Spleen (tissue), 13 donors: ENCODE measurements at regions of chr21 and their contacts with region 1.

Region 1: DNA sequence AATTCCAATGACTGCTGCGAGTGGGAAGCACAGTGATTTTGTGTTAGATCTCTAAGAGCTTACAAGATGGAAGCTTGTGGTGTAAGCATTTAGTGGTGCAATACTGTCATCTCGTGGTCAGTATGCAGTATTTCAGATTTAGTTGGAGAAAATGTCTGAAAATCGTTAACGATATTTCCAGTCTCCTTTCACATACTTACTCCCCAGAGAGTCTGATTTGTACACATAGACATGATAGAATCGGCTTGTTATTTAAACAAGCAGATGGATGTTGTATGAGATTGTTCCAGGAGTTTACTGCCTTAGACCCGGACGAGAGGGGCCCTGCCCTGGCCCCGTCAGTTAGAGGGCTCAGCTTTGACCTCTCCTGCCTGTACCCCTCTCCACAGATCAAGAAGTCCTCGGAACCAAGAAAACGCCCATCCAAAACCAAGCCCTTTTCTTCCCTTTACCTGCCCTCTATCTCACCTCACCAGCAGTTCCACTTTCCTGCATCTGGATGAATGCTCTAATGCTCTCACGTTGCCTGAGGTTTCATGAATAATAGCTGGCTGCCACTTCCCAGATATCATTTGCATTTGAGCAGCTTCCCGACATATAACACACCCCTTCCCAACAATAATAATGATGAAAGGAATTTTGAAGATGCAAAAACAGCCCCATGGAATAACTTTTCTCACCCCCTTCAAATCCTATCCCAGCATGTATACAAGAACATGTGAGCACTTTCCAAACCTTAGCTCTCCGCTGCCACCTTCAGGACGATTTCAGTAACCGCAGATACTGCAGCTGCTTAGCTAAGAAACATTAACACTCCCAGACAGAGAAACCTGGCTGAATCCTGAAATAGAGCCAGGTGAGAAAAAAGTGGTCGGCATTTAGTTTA is 247.3 kb downstream of the LTN1 start:
- DNase-seq: peak; percentile 77
- H3K4me3 ChIP-seq: peak overlapping the region; percentile 25 to 65 (median 33)
- H3K27ac ChIP-seq: peak overlapping the region in 5 of 8 donors; percentile 30 to 58 (median 49)
- H3K4me1 ChIP-seq: peaks cover 5 to 17% (median 14%) of the 10 kb centered on the region in 6 donors
- H3K27me3 ChIP-seq: no peaks in the 10 kb centered on the region
- CTCF ChIP-seq: peak; percentile 63 to 96 (median 83)
- POLR2A ChIP-seq: no peak

Region 2: GRCh38 chr21:26842976-26843932 is 1902.1 kb before region 1 on chr21:
- intact Hi-C with region 1: loop called (anchors 10 kb)
- DNase-seq: peak; percentile 80
- H3K4me3 ChIP-seq: peak overlapping the region; percentile 45 to 81 (median 60)
- H3K27ac ChIP-seq: peak overlapping the region; percentile 46 to 93 (median 87)
- H3K4me1 ChIP-seq: peaks cover 13 to 87% (median 57%) of the 10 kb centered on the region in 6 donors
- H3K27me3 ChIP-seq: peaks cover 0 to 68% (median 38%) of the 10 kb centered on the region in 7 donors
- CTCF ChIP-seq: peak in 4 of 11 experiments; percentile 8 to 26 (median 18)
- POLR2A ChIP-seq: no peak

Region 3: GRCh38 chr21:28063241-28064216 is 681.8 kb before region 1 on chr21:
- intact Hi-C with region 1: loop called (anchors 10 kb)
- DNase-seq: no peak
- H3K4me3 ChIP-seq: no peak overlapping the region
- H3K27ac ChIP-seq: no peak overlapping the region
- H3K4me1 ChIP-seq: peaks cover 0 to 13% (median 0%) of the 10 kb centered on the region in 6 donors
- H3K27me3 ChIP-seq: no peaks in the 10 kb centered on the region
- CTCF ChIP-seq: no peak
- POLR2A ChIP-seq: no peak

Region 4: DNA sequence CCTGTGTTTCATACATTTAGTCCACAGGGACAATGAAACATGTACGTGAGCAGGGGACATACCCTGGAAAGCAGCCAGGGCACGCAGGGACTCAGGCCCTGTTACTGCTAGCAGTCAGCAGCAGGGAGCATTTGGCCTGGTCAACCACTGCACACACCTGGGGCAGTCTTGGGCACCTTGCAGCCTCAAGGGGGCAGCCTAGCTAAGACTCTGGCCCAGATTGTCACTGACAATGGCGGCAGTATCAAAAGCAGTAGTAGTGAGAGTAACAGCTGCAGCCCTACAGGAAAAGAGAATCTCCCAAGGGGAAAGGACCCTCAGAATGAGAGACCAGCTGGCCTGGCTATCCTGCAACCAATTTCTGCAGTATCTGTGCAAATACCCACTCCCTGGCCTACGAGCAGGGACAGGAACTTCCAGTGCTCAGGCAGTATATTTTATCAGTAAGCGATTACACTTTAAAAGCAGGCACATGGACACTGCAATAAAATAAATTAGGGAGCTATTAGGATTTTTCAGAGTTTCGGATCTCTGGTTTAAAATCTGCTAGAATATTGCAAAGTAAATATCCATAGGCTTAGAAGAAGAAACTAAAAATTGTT is 228.3 kb before region 1 on chr21:
- intact Hi-C with region 1: loop called (anchors 5 kb)
- DNase-seq: peak; percentile 85
- H3K4me3 ChIP-seq: no peak overlapping the region
- H3K27ac ChIP-seq: no peak overlapping the region
- H3K4me1 ChIP-seq: peaks cover 0 to 12% (median 6%) of the 10 kb centered on the region in 6 donors
- H3K27me3 ChIP-seq: no peaks in the 10 kb centered on the region
- CTCF ChIP-seq: peak; percentile 26 to 79 (median 52)
- POLR2A ChIP-seq: no peak

Region 5: GRCh38 chr21:28633839-28634555 is 111.4 kb before region 1 on chr21:
- intact Hi-C with region 1: no loop called
- DNase-seq: no peak
- H3K4me3 ChIP-seq: no peak overlapping the region
- H3K27ac ChIP-seq: peak overlapping the region in 4 of 8 donors; percentile 20 to 70 (median 44)
- H3K4me1 ChIP-seq: peaks cover 0 to 6% (median 0%) of the 10 kb centered on the region in 6 donors
- H3K27me3 ChIP-seq: no peaks in the 10 kb centered on the region
- CTCF ChIP-seq: no peak
- POLR2A ChIP-seq: no peak